GM12878 (cell line): ENCODE measurements at regions of chr1 and their contacts with region 1.

Region 1: DNA sequence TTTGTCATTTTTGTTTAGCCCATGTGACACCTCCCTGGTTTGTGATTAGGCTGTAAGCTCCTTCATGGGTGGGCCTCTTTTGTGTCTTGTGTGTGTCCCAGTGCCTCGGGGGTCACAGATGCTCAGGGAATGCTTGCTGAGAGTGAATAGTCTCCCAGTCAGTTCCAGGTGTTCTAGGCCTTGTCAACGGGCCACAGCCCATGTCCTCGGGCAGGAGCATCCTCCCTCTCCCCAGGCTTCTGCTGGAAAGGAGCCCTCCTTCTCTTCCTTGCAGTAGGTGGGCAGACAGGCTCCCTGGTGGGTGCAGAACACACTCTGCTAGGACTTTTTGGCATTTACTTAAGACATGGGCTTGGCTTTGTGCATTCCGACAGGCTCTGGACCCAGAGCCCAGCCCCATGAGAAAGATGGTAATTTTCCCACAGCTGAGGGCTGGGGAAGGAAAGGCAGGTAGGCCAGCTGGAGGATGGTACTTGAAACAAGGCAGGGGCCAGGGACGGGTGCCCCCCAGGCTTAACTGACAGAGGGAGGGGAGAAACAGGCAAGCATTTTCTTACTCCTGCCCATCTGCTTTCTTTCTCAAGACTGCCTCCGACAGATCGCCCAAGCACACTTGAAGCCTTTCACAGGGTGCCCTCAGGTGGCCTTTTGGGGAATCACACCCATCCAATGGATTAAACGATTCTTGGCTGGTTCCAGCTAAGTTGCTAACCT is 7.1 kb upstream of the CPLANE2 start:
- DNase-seq: peak; percentile 21
- ATAC-seq: peak; percentile 88
- H3K4me3 ChIP-seq: no peak overlapping the region
- H3K27ac ChIP-seq: no peak overlapping the region
- H3K4me1 ChIP-seq: peaks cover 11% of the 10 kb centered on the region
- H3K27me3 ChIP-seq: no peaks in the 10 kb centered on the region
- CTCF ChIP-seq: peak; percentile 91 to 94 (median 91)
- EP300 ChIP-seq: no peak
- POLR2A ChIP-seq: no peak; the same call in 1 of the 2 replicates
- RAD21 ChIP-seq: peak; percentile 93

Region 2: GRCh38 chr1:16187748-16188401 is 56.2 kb before region 1 on chr1:
- CTCF ChIA-PET with region 1: interaction called, 15 read pairs
- POLR2A ChIA-PET with region 1: no interaction called
- RAD21 ChIA-PET with region 1: interaction called, 4 read pairs
- SMC1A ChIA-PET with region 1: interaction called, 11 read pairs
- in situ Hi-C with region 1: no loop called
- intact Hi-C with region 1: loop called (anchors 1 kb)
- DNase-seq: no peak
- ATAC-seq: peak; percentile 93
- H3K4me3 ChIP-seq: no peak overlapping the region
- H3K27ac ChIP-seq: no peak overlapping the region
- H3K4me1 ChIP-seq: no peaks in the 10 kb centered on the region
- H3K27me3 ChIP-seq: no peaks in the 10 kb centered on the region
- CTCF ChIP-seq: peak; percentile 91 to 96 (median 94)
- EP300 ChIP-seq: no peak
- POLR2A ChIP-seq: no peak
- RAD21 ChIP-seq: peak; percentile 98

Region 3: GRCh38 chr1:16206547-16207317 is 37.4 kb before region 1 on chr1:
- CTCF ChIA-PET with region 1: interaction called, 18 read pairs
- POLR2A ChIA-PET with region 1: no interaction called
- RAD21 ChIA-PET with region 1: no interaction called
- SMC1A ChIA-PET with region 1: interaction called, 3 read pairs
- in situ Hi-C with region 1: no loop called
- intact Hi-C with region 1: no loop called
- DNase-seq: peak; percentile 71
- ATAC-seq: peak; percentile 93
- H3K4me3 ChIP-seq: peak overlapping the region; percentile 68
- H3K27ac ChIP-seq: peak overlapping the region; percentile 28; the same call in 1 of the 2 replicates
- H3K4me1 ChIP-seq: peaks cover 4% of the 10 kb centered on the region; the same call in 1 of the 2 replicates
- H3K27me3 ChIP-seq: no peaks in the 10 kb centered on the region
- CTCF ChIP-seq: no peak
- EP300 ChIP-seq: no peak
- POLR2A ChIP-seq: peak; percentile 87
- RAD21 ChIP-seq: no peak